Caco-2 (cell line): ENCODE measurements at regions of chr4 and their contacts with region 1.

Region 1: DNA sequence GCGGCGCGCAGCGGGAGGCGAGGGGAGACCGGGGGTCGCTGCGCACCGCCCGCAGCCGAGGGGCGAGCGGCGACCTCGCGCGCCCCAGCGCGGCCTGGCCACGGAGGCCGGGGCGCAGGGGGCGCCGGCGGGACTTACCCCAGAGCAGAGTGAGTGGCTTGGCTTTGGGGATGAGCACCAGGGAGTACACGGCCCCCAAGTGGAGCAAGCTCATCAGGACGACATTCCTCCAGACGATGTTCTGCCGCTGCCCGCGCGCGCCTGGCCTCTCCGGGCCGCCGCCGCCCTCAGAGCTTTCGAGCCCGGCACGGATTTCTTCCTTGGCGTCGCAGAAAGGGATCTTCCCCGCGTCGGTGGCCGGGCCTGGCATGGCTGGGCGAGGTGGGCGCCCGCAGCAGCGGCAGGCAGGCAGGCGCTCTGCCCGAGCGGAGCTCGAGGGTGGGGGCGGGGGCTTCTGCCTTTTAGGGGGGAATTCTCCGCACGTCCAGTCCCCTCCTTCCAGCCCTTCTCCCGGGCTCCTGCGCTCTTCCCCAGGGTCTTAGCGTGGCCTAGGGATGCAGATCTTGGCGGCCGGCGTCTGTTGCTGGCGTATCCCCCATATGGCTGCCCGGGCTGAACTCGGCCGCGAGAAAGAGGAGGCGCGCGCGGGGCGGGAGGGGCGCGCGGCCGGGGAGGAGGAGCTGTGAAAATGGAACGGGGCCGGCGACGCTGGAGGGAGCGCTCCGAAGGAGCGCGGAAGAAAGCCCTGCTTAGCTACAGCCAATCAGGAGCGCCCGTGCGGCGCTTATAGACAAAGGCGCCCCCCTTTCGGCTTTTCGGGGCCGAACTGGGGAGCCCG is at the start of gene SCD5:
- DNase-seq: peak; percentile 42 to 51
- H3K4me3 ChIP-seq: peak within 1 kb of the TSS; percentile 64
- H3K4me3 Mint-ChIP-seq: peak within 1 kb of the TSS; percentile 74
- H3K27ac Mint-ChIP-seq: no peak within 1 kb of the TSS
- H3K4me1 ChIP-seq: no peaks in the 10 kb centered on the region
- H3K4me1 Mint-ChIP-seq: no peaks in the 10 kb centered on the region
- H3K27me3 ChIP-seq: no peaks in the 10 kb centered on the region
- H3K27me3 Mint-ChIP-seq: peaks cover 5% of the 10 kb centered on the region
- CTCF ChIP-seq: no peak
- total RNA-seq, gene SCD5: 2.7 and 3.4 TPM in 2 replicates

Region 2: DNA sequence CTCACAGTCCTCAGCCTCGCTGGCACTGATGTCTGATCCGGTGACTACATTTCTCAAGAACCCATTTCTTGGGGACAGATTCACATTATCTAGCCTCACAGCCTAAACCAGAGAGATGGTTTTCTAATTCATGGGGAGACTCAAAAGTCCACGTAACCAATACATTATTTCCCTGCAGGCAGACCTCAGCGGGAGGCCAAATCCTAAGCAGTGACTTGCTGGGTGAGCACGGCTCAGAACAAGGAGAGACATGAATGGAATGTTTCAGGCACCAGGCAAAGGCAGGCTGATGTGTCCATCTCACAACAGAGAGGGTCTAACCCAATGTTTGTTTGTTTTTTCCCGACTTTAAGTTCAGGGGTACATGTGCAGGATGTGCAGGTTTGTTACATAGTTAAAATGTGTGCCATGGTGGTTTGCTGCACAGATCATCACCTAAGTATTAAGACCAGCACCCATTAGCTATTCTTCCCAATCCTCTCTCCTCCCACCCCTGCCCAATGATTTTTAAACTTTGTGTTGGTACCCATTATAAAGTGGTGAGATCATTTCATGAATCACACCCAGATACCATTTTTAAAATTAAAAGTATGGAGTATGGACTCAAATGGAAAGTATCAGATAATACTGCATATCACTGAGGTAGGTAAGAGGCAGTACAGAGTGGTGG is 53.1 kb before region 1 on chr4:
- CTCF ChIA-PET with region 1: no interaction called
- POLR2A ChIA-PET with region 1: no interaction called
- intact Hi-C with region 1: loop called (anchors 5 kb)
- DNase-seq: no peak
- H3K4me3 ChIP-seq: no peak overlapping the region
- H3K4me3 Mint-ChIP-seq: no peak overlapping the region
- H3K27ac Mint-ChIP-seq: no peak overlapping the region
- H3K4me1 ChIP-seq: peaks cover 21% of the 10 kb centered on the region
- H3K4me1 Mint-ChIP-seq: peaks cover 19% of the 10 kb centered on the region
- H3K27me3 ChIP-seq: no peaks in the 10 kb centered on the region
- H3K27me3 Mint-ChIP-seq: no peaks in the 10 kb centered on the region
- CTCF ChIP-seq: no peak